CD14-positive monocyte (primary cell): ENCODE measurements at regions of chr3 and their contacts with region 1.

Region 1: DNA sequence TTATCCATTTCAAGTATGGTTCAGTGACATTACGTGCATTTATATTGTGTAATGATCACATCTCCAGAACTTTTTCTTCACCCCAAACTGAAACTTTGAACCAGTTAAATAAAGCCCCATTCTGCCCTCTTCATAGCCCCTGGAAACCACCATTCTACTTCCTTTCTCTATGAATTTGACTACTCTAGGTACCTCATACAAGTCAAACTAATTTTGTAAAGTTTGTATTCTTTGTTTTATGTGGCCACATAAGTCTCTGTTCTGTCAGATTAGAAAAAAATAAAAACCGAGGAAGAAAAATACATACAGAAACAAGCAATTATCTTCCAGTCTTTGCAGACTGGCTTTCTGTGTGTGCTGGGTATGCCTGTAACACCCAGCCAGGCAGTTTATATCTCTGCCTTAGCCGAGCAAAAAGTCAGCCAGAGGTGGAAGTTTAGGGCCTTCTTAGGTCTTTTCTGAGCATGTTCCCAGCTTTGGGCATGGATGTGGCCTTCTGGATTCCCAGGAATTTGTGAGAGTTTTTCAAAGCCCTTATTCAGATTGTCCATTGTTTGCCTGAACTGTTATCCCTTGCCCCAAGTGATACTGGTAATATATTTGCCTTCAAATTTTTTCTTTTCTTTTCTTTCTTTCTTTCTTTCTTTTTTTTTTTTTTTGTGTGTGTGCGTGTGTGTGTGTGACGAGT is 6.0 kb upstream of the GRAMD1C start:
- DNase-seq: no peak
- H3K4me3 ChIP-seq: no peak overlapping the region
- H3K4me3 Mint-ChIP-seq: no peak overlapping the region
- H3K27ac ChIP-seq: no peak overlapping the region
- H3K27ac Mint-ChIP-seq: peak overlapping the region in 1 of 7 donors; percentile 61
- H3K4me1 ChIP-seq: peaks cover 37 to 50% of the 10 kb centered on the region in 2 donors
- H3K4me1 Mint-ChIP-seq: peaks cover 46% of the 10 kb centered on the region
- H3K27me3 ChIP-seq: no peaks in the 10 kb centered on the region
- H3K27me3 Mint-ChIP-seq: peaks cover 0 to 7% (median 0%) of the 10 kb centered on the region in 3 donors
- CTCF ChIP-seq: no peak

Region 2: DNA sequence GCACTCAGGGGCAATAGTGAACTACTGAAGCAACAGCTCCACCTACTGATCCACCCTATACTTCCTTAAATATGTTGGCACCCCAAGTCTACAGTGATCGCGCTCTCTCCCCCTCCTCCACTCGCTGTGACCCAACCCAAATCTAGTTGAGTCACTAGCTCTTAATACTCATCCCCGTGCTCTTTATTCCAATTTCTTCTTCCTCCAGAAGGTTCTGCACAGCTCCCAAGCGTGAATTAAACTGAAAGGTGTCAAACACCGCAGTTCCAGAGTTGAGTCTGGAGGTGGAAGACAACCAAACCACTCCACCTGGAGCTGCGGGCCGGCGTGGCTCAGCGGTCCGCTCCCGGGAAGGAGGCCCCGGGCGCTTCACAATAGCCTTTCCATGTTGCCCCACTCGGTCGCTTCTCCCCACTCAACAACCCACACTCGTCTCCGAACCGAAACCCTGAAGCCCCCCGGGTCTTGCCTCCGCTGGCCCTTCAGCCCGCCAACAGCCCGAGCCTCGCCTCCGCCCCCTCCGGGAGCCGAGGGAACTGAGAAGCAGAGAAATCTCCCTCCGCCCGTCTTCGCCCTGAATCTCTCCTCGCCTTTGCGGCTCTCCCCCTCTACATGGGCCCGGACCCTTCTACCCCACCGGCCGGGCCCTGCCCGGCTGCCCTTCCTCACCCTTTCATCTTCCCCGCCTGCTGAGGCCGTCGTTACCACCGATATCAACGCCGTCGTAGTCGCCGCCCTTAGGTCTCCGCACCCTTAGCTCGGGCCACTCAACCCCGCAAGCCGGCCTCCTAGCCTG is 87.2 kb before region 1 on chr3:
- intact Hi-C with region 1: loop called in 1 of 2 experiments (anchors 5 kb)
- DNase-seq: peak; percentile 95 to 98 (median 96)
- H3K4me3 ChIP-seq: peak overlapping the region; percentile 68 to 99 (median 73)
- H3K4me3 Mint-ChIP-seq: peak overlapping the region; percentile 96 to 100
- H3K27ac ChIP-seq: peak overlapping the region; percentile 94 to 98
- H3K27ac Mint-ChIP-seq: peak overlapping the region; percentile 99 to 100 (median 100)
- H3K4me1 ChIP-seq: peaks cover 39 to 63% of the 10 kb centered on the region in 2 donors
- H3K4me1 Mint-ChIP-seq: peaks cover 69% of the 10 kb centered on the region
- H3K27me3 ChIP-seq: no peaks in the 10 kb centered on the region
- H3K27me3 Mint-ChIP-seq: peaks cover 0 to 3% (median 0%) of the 10 kb centered on the region in 3 donors
- CTCF ChIP-seq: peak; percentile 66

Region 3: GRCh38 chr3:113783463-113783862 is 49.2 kb before region 1 on chr3:
- intact Hi-C with region 1: loop called in 1 of 2 experiments (anchors 5 kb)
- DNase-seq: peak; percentile 42 to 71 (median 58)
- H3K4me3 ChIP-seq: peak overlapping the region; percentile 7 to 60 (median 19)
- H3K4me3 Mint-ChIP-seq: no peak overlapping the region
- H3K27ac ChIP-seq: peak overlapping the region in 1 of 2 donors; percentile 87
- H3K27ac Mint-ChIP-seq: peak overlapping the region in 6 of 7 donors; percentile 50 to 96 (median 89)
- H3K4me1 ChIP-seq: peaks cover 18 to 25% of the 10 kb centered on the region in 2 donors
- H3K4me1 Mint-ChIP-seq: peaks cover 16% of the 10 kb centered on the region
- H3K27me3 ChIP-seq: no peaks in the 10 kb centered on the region
- H3K27me3 Mint-ChIP-seq: no peaks in the 10 kb centered on the region
- CTCF ChIP-seq: no peak